ENCODE measurements at regions of chr10 and their contacts with region 1.

Region 1: DNA sequence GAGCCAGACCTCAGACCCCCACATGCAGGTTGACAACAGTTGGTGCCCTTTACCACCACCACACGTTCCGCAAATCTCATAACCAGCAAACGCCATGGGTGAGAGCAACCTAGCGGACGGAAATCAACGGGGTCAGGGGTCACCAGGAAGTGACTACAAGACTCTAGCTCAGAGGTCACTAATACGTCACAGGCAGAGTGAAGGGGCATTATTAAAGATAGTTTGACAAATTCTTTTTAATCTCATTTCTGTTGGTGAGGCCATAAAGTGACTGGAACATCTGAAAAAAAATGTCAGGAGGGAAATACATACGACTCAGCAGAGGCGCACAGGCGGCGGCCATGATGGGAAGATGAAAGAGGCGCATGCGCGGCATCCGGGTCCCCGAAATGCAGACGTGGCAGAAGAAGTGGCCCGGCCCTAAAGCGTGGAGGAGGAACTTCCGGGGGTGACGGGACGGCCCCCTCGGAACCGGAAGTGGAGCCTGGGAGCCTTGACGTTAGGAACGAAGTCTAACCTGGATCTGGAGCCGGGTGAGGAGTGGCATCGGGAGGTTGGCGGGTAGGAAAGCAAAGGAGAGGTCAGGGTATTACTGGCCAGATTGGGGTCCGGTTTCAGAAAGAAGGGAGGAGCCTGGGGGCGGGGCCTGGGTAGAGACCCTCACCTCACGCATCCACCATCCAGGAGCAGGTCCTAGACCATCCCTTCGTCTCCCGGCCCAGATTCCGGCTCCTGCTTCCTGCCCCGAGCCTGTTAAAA is at the start of gene SEC24C:
- DNase-seq: peak; percentile 87 to 97 (median 95)
- ATAC-seq: peak; percentile 90 to 95
- H3K4me3 Mint-ChIP-seq: peak within 1 kb of the TSS; percentile 91 to 100 (median 100)
- H3K27ac Mint-ChIP-seq: peak within 1 kb of the TSS; percentile 99 to 100 (median 100)
- H3K4me1 Mint-ChIP-seq: peaks cover 15 to 46% (median 40%) of the 10 kb centered on the region in 4 donors
- H3K27me3 Mint-ChIP-seq: no peaks in the 10 kb centered on the region
- polyA plus RNA-seq, gene SEC24C: 18.9 to 33.5 (median 25.9) TPM

Region 2: GRCh38 chr10:73730153-73730906 is 13.8 kb before region 1 on chr10:
- POLR2A ChIA-PET with region 1: interaction called, 50 read pairs
- DNase-seq: peak; percentile 70 to 95 (median 89)
- ATAC-seq: peak; percentile 90 to 93
- H3K4me3 Mint-ChIP-seq: peak overlapping the region; percentile 94 to 100 (median 98)
- H3K27ac Mint-ChIP-seq: peak overlapping the region; percentile 94 to 99 (median 97)
- H3K4me1 Mint-ChIP-seq: peaks cover 9 to 24% (median 16%) of the 10 kb centered on the region in 4 donors
- H3K27me3 Mint-ChIP-seq: no peaks in the 10 kb centered on the region

Measured in naive thymus-derived CD8-positive, alpha-beta T cell (primary cell).